Activated T-helper 1 cell treated with anti-CD3 and anti-CD28 coated beads, Interleukin-12 subunit alpha, Interleukin-12 subunit beta, Interleukin-2, Interleukin-4 antibody, amounts not matched to agents 30 ng/mL and 10 ng/mL and 1 ng/mL, durations not matched to agents 14 hours and 24 hours and 36 hours (primary cell): ENCODE measurements at regions of chr7 and their contacts with region 1.

Region 1: GRCh38 chr7:157138424-157139110 is at the start of gene UBE3C:
- DNase-seq: peak; percentile 89
- H3K4me3 Mint-ChIP-seq: peak within 1 kb of the TSS; percentile 88
- H3K27ac Mint-ChIP-seq: peak within 1 kb of the TSS; percentile 97
- H3K4me1 Mint-ChIP-seq: peaks cover 41% of the 10 kb centered on the region
- H3K27me3 Mint-ChIP-seq: no peaks in the 10 kb centered on the region
- total RNA-seq, gene UBE3C: 91.5 and 95.8 TPM in 2 replicates

Region 2: DNA sequence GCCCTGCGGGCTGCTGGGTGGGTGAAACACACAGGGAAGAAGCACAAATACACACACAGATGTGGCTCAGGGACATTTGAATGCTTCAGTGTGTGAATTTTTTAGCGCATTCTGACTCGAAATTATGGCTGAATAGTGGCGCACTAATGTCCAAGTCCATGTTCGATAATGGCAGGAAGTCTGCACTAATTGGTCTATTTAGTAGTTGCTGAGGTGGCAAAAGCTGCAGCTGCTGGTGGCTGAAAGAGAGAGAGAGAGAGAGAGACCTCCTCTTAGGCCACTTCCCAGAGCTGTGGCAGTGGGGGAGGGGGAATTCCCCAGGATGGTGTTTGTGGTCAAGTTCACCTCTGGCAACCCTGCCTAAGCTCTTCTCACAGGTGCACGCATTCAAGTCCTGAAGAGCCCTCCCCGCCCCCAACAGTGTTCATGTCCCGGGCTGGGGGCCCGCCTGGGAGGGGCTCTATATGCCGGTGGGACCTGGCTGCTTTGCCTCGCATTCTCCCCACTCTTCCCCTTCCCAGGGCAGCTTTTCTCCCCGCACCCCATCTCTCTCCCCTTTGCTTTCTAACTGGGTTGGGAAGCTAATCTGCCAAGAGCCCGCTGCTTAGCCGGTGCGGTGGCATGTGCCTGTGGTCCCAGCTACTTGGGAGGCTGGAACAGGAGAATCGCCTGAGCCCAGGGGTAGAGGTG is 122.1 kb before region 1 on chr7:
- intact Hi-C with region 1: loop called (anchors 1 kb)
- DNase-seq: peak; percentile 20
- H3K4me3 Mint-ChIP-seq: no peak overlapping the region
- H3K27ac Mint-ChIP-seq: peak overlapping the region; percentile 44
- H3K4me1 Mint-ChIP-seq: peaks cover 14% of the 10 kb centered on the region
- H3K27me3 Mint-ChIP-seq: peaks cover 80% of the 10 kb centered on the region